T-cell (primary cell): ENCODE measurements at regions of chr12 and their contacts with region 1.

Region 1: DNA sequence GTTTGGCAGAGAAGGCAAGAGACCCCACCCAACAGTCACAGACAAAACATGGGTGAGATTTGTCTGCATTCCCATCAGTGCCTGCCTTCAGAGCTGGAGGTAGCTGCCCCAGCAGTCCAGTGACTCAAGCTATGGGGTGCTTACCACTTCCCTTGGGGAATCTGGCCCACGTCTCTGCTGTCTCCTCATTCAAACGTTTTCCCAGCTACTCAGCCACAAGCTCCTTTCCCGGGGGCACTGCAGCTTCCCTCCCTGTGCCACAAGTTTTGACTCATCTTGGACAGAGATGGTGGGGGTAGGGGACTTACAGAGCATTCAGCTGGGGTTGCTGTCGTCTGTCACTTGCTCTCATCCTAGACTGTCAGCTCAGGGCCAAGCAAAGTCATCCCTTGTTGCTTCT is 66.6 kb downstream of the FBXL14 start:
- DNase-seq: no peak
- ATAC-seq: no peak
- H3K4me3 ChIP-seq: no peak overlapping the region
- H3K4me3 Mint-ChIP-seq: no peak overlapping the region
- H3K27ac ChIP-seq: no peak overlapping the region
- H3K27ac Mint-ChIP-seq: no peak overlapping the region
- H3K4me1 ChIP-seq: peaks cover 3 to 20% of the 10 kb centered on the region in 2 experiments
- H3K4me1 Mint-ChIP-seq: peaks cover 18 to 20% (median 20%) of the 10 kb centered on the region in 3 donors
- H3K27me3 ChIP-seq: peaks cover 26 to 78% of the 10 kb centered on the region in 2 experiments
- H3K27me3 Mint-ChIP-seq: peaks cover 59 to 73% of the 10 kb centered on the region in 2 donors

Region 2: DNA sequence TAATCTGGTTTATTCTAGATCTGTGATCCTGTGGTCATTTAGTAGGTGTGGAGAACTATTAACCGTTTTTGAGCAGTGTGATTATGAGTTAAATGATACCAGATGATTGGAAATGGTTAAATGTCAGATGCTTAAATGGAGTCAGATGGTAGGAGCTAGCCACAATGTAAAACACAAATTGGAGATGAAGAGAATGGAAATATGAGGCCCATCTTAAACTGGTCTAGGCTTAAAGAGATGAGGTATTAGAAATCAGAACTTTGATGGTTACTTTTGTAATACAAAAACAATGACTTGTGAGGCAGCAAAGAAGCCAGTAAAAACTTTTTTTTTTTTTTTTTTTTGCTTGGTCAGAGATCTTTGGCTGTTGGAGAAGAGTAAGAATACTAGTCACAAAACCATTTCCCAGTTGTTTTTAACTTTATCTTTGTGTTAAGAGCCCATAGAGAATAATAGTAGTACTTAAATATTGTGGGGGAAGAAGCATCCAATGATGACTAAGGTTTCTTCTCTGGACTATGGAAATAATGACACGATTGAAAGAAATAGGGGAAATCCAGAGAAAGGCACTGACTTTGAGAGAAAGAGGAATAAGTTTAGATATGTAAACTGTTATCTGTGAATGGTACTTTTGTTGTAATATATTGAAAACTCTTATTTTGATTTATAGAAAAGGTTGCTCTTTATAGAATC is 679.5 kb before region 1 on chr12:
- CTCF ChIA-PET with region 1: no interaction called
- POLR2A ChIA-PET with region 1: interaction called in 1 of 2 experiments, 11 read pairs
- DNase-seq: no peak
- ATAC-seq: no peak
- H3K4me3 ChIP-seq: no peak overlapping the region
- H3K4me3 Mint-ChIP-seq: no peak overlapping the region
- H3K27ac ChIP-seq: peak overlapping the region; percentile 12
- H3K27ac Mint-ChIP-seq: peak overlapping the region; percentile 30 to 42
- H3K4me1 ChIP-seq: peaks cover 2 to 7% of the 10 kb centered on the region in 2 experiments
- H3K4me1 Mint-ChIP-seq: peaks cover 43 to 67% (median 66%) of the 10 kb centered on the region in 3 donors
- H3K27me3 ChIP-seq: no peaks in the 10 kb centered on the region
- H3K27me3 Mint-ChIP-seq: no peaks in the 10 kb centered on the region

Region 3: DNA sequence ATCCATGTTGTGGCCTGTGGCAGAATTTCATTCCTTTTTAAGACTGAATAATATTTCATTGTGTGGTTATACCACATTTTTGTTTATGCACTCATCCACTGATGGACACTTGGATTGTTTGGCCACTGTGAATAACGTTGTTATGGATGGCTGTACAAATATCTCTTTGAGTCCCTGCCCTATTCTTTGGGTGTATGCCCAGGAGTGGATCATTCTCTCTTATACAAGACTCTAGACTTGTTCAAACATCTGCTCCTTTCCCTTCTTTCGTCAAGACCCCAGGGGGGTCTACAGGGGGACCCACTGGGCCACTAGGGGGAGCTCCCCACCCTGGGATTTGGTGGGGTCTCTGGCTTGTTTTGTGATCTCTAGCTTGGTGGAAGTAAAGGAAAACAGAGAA is 10.8 kb before region 1 on chr12:
- CTCF ChIA-PET with region 1: no interaction called
- POLR2A ChIA-PET with region 1: interaction called in 1 of 2 experiments, 12 read pairs
- DNase-seq: no peak
- ATAC-seq: no peak
- H3K4me3 ChIP-seq: no peak overlapping the region
- H3K4me3 Mint-ChIP-seq: no peak overlapping the region
- H3K27ac ChIP-seq: no peak overlapping the region
- H3K27ac Mint-ChIP-seq: no peak overlapping the region
- H3K4me1 ChIP-seq: no peaks in the 10 kb centered on the region
- H3K4me1 Mint-ChIP-seq: no peaks in the 10 kb centered on the region
- H3K27me3 ChIP-seq: peaks cover 0 to 27% of the 10 kb centered on the region in 2 experiments
- H3K27me3 Mint-ChIP-seq: peaks cover 14 to 15% of the 10 kb centered on the region in 2 donors